ENCODE measurements at regions of chr20 and their contacts with region 1.

Region 1: DNA sequence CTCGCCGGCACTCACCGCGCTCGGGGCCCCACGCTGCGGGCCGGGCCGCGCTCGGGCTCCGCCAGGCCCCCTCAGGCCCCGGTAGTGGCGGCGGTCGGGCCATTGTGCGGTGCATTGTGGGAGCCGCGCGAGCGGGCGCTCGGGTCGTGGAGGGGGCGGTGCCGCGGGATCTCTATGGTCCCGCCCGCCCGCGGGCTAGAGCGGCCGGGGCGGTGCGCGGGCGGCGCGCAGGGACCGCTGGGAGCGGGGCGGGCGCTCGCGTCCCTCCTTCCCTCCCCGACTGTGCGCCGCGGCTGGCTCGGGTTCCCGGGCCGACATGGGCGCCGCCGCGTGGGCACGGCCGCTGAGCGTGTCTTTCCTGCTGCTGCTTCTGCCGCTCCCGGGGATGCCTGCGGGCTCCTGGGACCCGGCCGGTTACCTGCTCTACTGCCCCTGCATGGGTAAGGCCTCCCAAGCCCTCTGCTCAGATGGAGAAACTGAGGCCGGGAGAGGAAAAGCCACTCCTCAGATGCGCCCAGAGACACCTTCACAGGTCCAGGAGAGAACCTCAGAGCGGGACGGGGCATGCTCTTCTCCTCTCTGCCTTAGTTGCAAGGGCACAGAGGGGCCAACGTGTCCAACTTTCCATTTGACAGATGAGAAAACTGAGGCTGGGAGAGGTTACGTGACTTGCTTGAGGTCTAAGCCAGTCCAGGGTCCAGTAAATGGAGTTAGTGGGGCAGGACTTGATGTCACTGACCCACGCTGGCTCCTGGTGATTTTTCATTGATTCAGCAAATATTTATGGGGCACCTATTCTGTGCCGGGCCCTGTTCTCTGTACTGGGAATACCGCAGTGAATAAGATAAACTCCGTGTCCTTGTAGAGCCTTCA is at the starts of genes PLAGL2 and POFUT1:
- DNase-seq: peak; percentile 92
- ATAC-seq: peak; percentile 98 to 99
- total RNA-seq, gene PLAGL2: 6.9 to 8.0 TPM
- total RNA-seq, gene POFUT1: 25.5 to 28.6 TPM

Region 2: GRCh38 chr20:32249030-32249738 is 41.3 kb after region 1 on chr20:
- intact Hi-C with region 1: no loop called
- DNase-seq: no peak
- ATAC-seq: no peak

Region 3: GRCh38 chr20:32263398-32263954 is 55.6 kb after region 1 on chr20:
- intact Hi-C with region 1: no loop called
- DNase-seq: no peak
- ATAC-seq: no peak

Region 4: DNA sequence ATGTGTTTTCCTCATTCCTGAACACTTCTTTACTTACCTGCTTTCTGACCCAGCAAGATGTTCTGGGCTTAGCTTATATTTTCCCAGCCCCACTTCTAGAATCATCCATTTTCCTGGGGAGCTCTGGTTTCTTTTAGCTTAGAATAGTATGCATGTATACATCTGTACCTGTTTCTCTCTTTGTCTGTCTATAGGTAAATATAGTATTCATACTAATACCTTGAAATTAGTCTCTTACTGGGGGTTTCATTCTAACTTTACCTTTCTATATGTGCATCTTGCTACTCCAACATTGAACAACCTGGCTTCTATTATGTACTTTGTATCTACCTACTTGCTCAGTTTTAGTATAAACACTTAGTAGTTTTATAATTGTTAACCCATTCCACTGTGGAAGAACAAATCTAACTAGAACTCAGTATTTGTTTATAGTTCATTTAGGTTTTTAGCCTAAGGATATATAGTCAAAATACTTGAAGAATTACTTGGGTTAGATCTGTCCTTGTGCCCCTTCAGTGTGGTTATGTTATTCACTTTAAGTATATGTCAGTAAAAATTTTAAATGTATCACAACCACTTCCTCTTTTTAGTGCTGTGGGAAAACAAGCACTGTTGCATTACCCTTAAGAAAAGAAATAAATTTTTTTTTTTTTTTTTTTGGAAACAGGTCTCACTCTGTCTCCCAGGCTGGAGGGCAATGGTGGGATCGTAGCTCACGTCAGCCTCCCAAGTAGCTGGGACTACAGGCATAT is 204.3 kb after region 1 on chr20:
- intact Hi-C with region 1: no loop called
- DNase-seq: no peak
- ATAC-seq: no peak

Region 5: DNA sequence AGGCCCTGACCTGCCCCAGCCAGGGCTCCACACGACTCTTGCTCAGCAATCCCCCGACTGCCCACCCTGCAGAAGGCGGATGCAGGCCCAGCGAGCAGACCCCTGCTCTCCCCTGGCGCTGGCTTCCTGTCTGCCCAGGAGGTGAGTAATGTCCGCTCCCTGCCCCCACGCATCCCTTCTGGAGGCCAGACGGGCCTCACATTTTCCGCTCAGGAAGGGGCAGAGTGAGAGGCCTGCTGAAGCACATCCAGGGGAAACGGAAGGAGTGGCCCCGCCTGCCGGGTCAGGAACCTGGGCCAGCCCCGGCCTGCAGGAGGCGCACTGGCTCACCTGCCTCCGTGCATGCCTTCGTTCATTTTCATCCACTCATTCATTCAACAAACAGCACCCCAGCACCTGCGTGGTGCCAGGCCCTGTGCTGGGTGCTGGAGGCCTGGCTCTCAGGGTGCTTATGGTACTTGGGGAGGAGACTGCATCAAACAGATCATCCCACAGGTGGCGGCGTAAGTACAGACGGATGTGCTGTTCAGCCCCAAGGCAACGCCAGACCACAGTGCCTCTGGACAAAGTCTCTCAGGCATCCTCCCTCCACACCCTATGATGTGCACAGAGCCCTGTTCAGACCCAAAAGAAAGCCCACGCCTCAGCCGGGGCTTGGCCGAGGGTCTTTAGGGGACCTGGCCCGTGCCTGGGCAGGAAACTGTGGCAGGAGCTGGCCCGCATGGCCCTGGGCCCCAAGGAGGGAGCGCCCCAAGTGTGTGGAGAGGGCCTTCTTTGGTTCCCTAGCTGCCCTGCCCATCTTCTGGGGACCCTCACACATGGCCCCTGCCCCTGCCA is 262.4 kb after region 1 on chr20:
- intact Hi-C with region 1: no loop called
- DNase-seq: peak; percentile 89
- ATAC-seq: peak; percentile 34 to 45

Region 6: GRCh38 chr20:32484958-32485769 is 277.3 kb after region 1 on chr20:
- intact Hi-C with region 1: loop called in 1 of 2 experiments (anchors 5 kb)
- DNase-seq: peak; percentile 81
- ATAC-seq: peak; percentile 39 to 56

Measured in left cardiac atrium (tissue), 4 donors.